Right ventricle myocardium inferior (tissue), 1 donor: ENCODE measurements at regions of chr2 and their contacts with region 1.

Region 1: GRCh38 chr2:46171411-46171953 is 125.7 kb upstream of the EPAS1 start:
- DNase-seq: no peak
- ATAC-seq: peak; percentile 42

Region 2: GRCh38 chr2:46134531-46135181 is 36.8 kb before region 1 on chr2:
- intact Hi-C with region 1: loop called (anchors 5 kb)
- DNase-seq: no peak
- ATAC-seq: peak; percentile 76